GM10248 (cell line): ENCODE measurements at regions of chr3 and their contacts with region 1.

Region 1: DNA sequence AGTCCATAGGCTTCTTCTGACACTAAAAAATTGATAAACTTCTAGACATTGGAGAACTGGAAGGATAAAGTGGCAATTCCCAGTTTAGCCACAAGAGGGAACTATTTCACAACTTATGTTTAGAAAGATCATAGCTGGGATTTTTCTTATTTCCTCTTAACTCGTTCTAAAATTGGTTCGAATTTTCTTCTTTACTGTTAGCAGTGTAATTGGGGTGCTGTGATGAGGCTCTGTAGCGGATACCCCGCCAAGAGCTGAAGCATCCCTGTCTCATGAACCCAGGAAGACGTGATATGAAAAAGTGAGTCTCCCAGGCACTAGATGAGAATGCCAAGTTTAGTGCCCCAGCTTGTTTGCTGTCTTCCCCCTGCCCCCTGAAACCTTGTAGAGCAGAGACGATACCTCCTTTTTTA is 85.1 kb downstream of the PDCD6IP start:
- DNase-seq: peak; percentile 45
- CTCF ChIP-seq: peak; percentile 73

Region 2: DNA sequence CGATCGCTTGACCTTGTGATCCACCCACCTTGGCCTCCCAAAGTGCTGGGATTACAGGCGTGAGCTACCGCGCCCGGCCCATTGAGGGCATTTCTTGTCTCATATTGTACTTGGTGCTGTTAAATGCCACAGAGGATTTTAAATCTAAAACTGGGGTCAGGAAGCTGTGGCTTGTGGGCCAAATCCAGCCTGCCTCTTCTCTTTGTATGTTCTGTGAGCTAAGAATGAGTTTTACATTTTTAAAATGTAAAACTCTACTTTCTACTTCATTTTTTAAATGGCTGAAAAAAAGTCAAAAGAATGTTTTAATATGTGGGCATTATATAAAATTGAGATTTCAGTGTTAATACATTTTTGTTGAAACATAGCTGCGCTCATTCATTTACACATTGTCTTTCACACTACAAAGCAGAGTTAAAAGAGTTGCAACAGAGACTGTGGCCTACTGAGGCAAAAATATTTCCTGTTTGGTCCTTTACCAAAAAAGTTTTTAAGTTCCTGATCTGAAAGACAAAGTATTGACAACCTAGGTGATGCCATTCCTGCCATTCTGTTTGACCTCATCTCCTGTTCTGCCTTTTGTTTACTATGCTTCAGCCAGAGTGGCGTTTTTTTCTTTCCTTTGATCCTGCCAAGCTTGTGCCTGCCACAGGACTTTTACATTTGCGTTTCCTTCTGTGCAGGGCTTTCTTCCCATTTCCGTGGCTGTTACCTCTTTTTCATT is 34.8 kb before region 1 on chr3:
- CTCF ChIA-PET with region 1: no interaction called
- POLR2A ChIA-PET with region 1: no interaction called
- DNase-seq: no peak
- CTCF ChIP-seq: no peak

Region 3: DNA sequence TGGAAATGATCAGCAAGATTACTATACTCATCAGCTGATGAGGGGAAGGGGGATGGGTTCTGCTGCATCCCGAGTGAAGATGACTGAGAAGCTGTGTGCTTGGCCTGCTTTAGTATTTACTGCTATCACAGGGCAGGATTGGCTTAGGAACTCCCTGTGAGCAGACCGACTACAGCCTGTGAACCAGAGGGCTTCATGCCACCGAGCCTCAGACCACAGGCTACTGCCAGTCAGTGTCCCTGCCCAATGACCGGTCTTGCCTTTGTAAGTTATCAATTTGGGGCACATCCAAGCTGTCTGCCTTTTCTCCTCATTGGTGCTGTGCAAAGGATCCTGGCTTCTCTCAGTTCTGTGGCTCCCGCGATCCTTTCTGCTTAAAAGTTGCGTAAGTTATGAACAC is 13.6 kb before region 1 on chr3:
- CTCF ChIA-PET with region 1: interaction called, 32 read pairs
- POLR2A ChIA-PET with region 1: no interaction called
- DNase-seq: no peak
- CTCF ChIP-seq: no peak

Region 4: GRCh38 chr3:33900809-33901505 is 17.4 kb after region 1 on chr3:
- CTCF ChIA-PET with region 1: interaction called, 26 read pairs
- POLR2A ChIA-PET with region 1: no interaction called
- DNase-seq: no peak
- CTCF ChIP-seq: no peak

Region 5: DNA sequence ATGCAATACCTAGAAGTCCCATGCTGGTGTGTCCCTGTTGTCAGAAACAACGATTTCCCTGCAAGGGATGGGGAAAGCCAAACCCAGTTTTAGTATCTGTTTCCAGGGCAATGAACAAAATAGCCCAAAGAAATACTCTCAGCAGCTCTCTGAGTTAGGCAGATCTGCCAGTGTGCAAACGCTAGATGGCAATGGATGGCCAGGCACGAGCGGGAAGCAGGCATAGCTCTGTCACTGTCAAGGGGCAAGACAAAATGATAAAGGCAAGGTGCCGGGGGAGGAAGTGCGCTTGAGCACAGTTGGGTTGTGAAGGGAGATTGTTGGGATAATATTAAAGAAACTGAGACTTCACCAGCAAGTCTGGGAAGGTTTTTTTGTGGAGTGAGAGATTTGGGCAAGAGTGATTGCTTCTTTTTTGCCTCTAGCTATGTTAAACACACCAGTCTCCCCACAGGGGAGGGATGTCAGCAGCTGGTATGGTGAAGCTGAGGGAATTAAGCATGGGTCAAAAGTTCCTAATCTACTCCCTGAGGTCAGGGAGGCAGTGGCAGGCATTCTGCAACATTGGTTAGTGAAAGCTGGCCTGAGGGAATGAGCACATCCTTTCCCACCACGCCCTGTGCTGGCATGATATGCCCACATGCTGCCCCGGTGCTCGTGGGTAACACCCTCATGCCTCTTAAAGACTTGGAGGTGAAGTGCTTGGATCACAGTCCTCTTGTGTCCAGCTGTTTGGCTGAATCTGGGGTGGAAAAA is 32.4 kb after region 1 on chr3:
- CTCF ChIA-PET with region 1: interaction called, 11 read pairs
- POLR2A ChIA-PET with region 1: no interaction called
- DNase-seq: peak; percentile 28
- CTCF ChIP-seq: peak; percentile 35

Region 6: GRCh38 chr3:34571306-34572093 is 688.0 kb after region 1 on chr3:
- CTCF ChIA-PET with region 1: no interaction called
- POLR2A ChIA-PET with region 1: no interaction called
- DNase-seq: no peak
- CTCF ChIP-seq: no peak